A673 (cell line): ENCODE measurements at regions of chr4 and their contacts with region 1.

Region 1: DNA sequence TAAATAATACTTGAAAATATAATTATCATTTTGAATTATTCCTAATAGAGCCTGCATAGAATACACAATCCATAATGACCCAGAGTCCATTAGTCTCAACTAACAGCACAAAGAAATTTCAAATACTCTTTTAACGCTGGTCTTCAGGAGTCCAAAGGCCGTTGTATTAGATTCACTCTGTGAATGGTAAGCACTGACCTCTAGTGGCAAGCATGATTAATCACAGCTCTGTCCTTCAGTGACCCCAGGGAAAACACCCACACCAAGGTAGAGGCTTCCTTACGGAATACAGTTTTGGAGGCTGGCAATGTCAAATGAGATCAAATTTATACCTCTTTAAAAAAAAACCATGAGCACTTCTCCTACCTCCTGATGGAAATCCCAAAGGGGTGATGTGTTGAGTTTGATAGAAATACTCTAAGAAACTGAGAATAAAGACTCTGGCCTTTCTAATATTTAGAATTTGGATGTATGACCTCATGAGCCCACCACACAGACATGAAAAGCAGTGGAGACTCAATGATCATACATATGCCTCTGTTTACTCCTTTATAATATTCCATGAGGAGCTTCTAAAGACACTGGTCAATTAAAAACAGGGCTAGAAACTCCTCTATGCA is 147.2 kb upstream of the DKK2 start:
- DNase-seq: peak; percentile 88
- H3K4me3 ChIP-seq: no peak overlapping the region
- H3K27ac ChIP-seq: peak overlapping the region; percentile 32
- H3K4me1 ChIP-seq: peaks cover 23% of the 10 kb centered on the region
- H3K27me3 ChIP-seq: no peaks in the 10 kb centered on the region
- CTCF ChIP-seq: peak; percentile 87

Region 2: GRCh38 chr4:106818764-106819163 is 364.5 kb before region 1 on chr4:
- CTCF ChIA-PET with region 1: interaction called, 3 read pairs
- POLR2A ChIA-PET with region 1: no interaction called
- intact Hi-C with region 1: loop called (anchors 5 kb)
- DNase-seq: no peak
- H3K4me3 ChIP-seq: no peak overlapping the region
- H3K27ac ChIP-seq: no peak overlapping the region
- H3K4me1 ChIP-seq: no peaks in the 10 kb centered on the region
- H3K27me3 ChIP-seq: no peaks in the 10 kb centered on the region
- CTCF ChIP-seq: peak; percentile 62

Region 3: DNA sequence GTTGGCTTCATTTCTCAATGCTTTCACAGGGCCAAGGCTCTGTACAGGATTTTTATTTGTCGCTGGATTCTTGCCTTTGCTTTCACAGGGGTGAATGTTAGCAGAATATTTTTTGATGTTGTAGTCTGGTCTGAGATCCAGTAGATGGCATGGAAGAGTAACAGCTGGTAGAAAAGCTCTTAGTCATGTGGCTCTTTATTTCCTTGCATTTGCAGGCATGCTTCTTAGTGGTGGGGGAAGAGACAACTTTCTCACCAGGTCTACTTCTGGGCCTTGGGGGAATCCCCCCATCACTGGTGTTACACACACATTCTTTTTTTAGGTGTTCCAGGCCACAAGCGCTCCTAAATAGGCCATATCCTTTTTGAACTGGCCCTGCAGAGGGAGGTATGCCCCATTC is 88.9 kb before region 1 on chr4:
- CTCF ChIA-PET with region 1: interaction called, 5 read pairs
- POLR2A ChIA-PET with region 1: no interaction called
- intact Hi-C with region 1: loop called (anchors 1 kb)
- DNase-seq: peak; percentile 82
- H3K4me3 ChIP-seq: no peak overlapping the region
- H3K27ac ChIP-seq: peak overlapping the region; percentile 71
- H3K4me1 ChIP-seq: peaks cover 20% of the 10 kb centered on the region
- H3K27me3 ChIP-seq: no peaks in the 10 kb centered on the region
- CTCF ChIP-seq: peak; percentile 69

Region 4: GRCh38 chr4:107519053-107519452 is 335.8 kb after region 1 on chr4:
- CTCF ChIA-PET with region 1: no interaction called
- POLR2A ChIA-PET with region 1: no interaction called
- intact Hi-C with region 1: loop called (anchors 5 kb)
- DNase-seq: peak; percentile 83
- H3K4me3 ChIP-seq: no peak overlapping the region
- H3K27ac ChIP-seq: peak overlapping the region; percentile 46
- H3K4me1 ChIP-seq: peaks cover 16% of the 10 kb centered on the region
- H3K27me3 ChIP-seq: no peaks in the 10 kb centered on the region
- CTCF ChIP-seq: peak; percentile 80

Region 5: DNA sequence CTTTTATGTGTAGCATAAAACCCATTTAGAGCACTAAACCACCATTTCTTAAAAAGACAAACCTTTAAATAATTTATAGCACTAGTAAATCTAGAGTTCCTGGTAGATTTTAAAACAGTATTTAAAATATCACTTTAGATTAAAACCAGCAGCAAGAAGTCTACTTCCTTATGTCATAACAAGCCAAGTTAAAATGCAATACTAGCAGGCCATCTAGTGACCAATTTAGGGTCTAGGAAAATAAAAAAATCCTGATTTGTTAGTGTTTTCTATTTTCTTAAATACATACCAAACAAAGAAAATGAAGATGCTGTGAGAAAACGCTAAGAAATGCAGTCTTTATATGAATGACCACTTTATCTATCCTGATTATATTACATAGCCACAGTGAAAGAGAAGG is 482.9 kb after region 1 on chr4:
- CTCF ChIA-PET with region 1: no interaction called
- POLR2A ChIA-PET with region 1: no interaction called
- intact Hi-C with region 1: loop called (anchors 10 kb)
- DNase-seq: peak; percentile 54
- H3K4me3 ChIP-seq: no peak overlapping the region
- H3K27ac ChIP-seq: no peak overlapping the region
- H3K4me1 ChIP-seq: peaks cover 9% of the 10 kb centered on the region
- H3K27me3 ChIP-seq: no peaks in the 10 kb centered on the region
- CTCF ChIP-seq: peak; percentile 52

Region 6: DNA sequence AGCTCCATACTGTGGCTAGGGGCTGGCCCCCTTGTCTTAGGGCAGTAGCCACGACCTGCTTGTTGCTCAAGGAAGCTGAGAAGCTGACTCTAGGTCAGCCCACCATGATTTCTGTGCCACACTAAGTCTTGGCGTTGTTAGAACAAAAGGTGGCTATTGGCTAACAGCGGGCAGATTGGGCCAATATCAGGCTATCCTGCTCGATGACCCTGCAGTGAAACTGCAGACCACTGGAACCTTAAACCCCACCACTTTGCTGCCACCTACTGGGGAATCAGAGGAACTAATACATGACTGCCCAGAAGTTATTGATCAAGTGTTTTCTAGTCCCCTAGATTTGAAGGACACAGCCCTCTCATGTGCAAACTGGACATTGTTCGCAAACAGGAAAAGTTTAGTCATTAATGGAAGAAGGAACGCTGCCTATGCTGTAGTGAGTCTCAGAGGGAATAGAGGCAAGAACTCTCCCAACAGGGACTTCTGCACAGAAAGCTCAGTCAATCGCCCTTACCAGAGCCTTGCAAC is 553.7 kb after region 1 on chr4:
- CTCF ChIA-PET with region 1: no interaction called
- POLR2A ChIA-PET with region 1: no interaction called
- intact Hi-C with region 1: loop called (anchors 10 kb)
- DNase-seq: peak; percentile 69
- H3K4me3 ChIP-seq: no peak overlapping the region
- H3K27ac ChIP-seq: no peak overlapping the region
- H3K4me1 ChIP-seq: peaks cover 37% of the 10 kb centered on the region
- H3K27me3 ChIP-seq: no peaks in the 10 kb centered on the region
- CTCF ChIP-seq: peak; percentile 88